Naive thymus-derived CD4-positive, alpha-beta T cell (primary cell): ENCODE measurements at regions of chr7 and their contacts with region 1.

Region 1: GRCh38 chr7:1617957-1618356 is 48.1 kb upstream of the PSMG3 start:
- DNase-seq: no peak
- ATAC-seq: peak; percentile 20
- H3K4me3 ChIP-seq: no peak overlapping the region
- H3K4me3 Mint-ChIP-seq: no peak overlapping the region
- H3K27ac ChIP-seq: no peak overlapping the region
- H3K27ac Mint-ChIP-seq: peak overlapping the region in 1 of 9 donors; percentile 13
- H3K4me1 ChIP-seq: no peaks in the 10 kb centered on the region
- H3K4me1 Mint-ChIP-seq: no peaks in the 10 kb centered on the region
- H3K27me3 ChIP-seq: no peaks in the 10 kb centered on the region
- H3K27me3 Mint-ChIP-seq: peaks cover 0 to 13% (median 0%) of the 10 kb centered on the region in 5 donors

Region 2: GRCh38 chr7:1592299-1592871 is 25.6 kb before region 1 on chr7:
- CTCF ChIA-PET with region 1: no interaction called
- POLR2A ChIA-PET with region 1: no interaction called
- intact Hi-C with region 1: loop called in 1 of 2 experiments (anchors 1 kb)
- DNase-seq: no peak
- ATAC-seq: peak; percentile 16
- H3K4me3 ChIP-seq: no peak overlapping the region
- H3K4me3 Mint-ChIP-seq: peak overlapping the region; percentile 17 to 92 (median 67)
- H3K27ac ChIP-seq: no peak overlapping the region
- H3K27ac Mint-ChIP-seq: peak overlapping the region in 2 of 9 donors; percentile 6 to 45
- H3K4me1 ChIP-seq: peaks cover 7 to 22% of the 10 kb centered on the region in 2 donors
- H3K4me1 Mint-ChIP-seq: peaks cover 14 to 30% (median 19%) of the 10 kb centered on the region in 7 donors
- H3K27me3 ChIP-seq: peaks cover 0 to 8% of the 10 kb centered on the region in 2 donors
- H3K27me3 Mint-ChIP-seq: peaks cover 20 to 44% (median 32%) of the 10 kb centered on the region in 5 donors

Region 3: GRCh38 chr7:1603346-1604211 is 14.4 kb before region 1 on chr7:
- CTCF ChIA-PET with region 1: no interaction called
- POLR2A ChIA-PET with region 1: no interaction called
- intact Hi-C with region 1: no loop called
- DNase-seq: no peak
- ATAC-seq: no peak
- H3K4me3 ChIP-seq: no peak overlapping the region
- H3K4me3 Mint-ChIP-seq: no peak overlapping the region
- H3K27ac ChIP-seq: no peak overlapping the region
- H3K27ac Mint-ChIP-seq: no peak overlapping the region
- H3K4me1 ChIP-seq: no peaks in the 10 kb centered on the region
- H3K4me1 Mint-ChIP-seq: peaks cover 0 to 4% (median 0%) of the 10 kb centered on the region in 7 donors
- H3K27me3 ChIP-seq: no peaks in the 10 kb centered on the region
- H3K27me3 Mint-ChIP-seq: peaks cover 0 to 25% (median 0%) of the 10 kb centered on the region in 5 donors

Region 4: GRCh38 chr7:1663223-1663622 is 45.3 kb after region 1 on chr7:
- CTCF ChIA-PET with region 1: no interaction called
- POLR2A ChIA-PET with region 1: no interaction called
- intact Hi-C with region 1: no loop called
- DNase-seq: peak in 1 of 9 donors; percentile 16
- ATAC-seq: peak; percentile 44
- H3K4me3 ChIP-seq: no peak overlapping the region
- H3K4me3 Mint-ChIP-seq: peak overlapping the region; percentile 3 to 90 (median 42)
- H3K27ac ChIP-seq: no peak overlapping the region
- H3K27ac Mint-ChIP-seq: peak overlapping the region in 1 of 9 donors; percentile 26
- H3K4me1 ChIP-seq: no peaks in the 10 kb centered on the region
- H3K4me1 Mint-ChIP-seq: peaks cover 0 to 7% (median 2%) of the 10 kb centered on the region in 7 donors
- H3K27me3 ChIP-seq: peaks cover 0 to 3% of the 10 kb centered on the region in 2 donors
- H3K27me3 Mint-ChIP-seq: peaks cover 28 to 46% (median 36%) of the 10 kb centered on the region in 5 donors